Activated T-helper 1 cell treated with anti-CD3 and anti-CD28 coated beads, Interleukin-12 subunit alpha, Interleukin-12 subunit beta, Interleukin-2, Interleukin-4 antibody, amounts not matched to agents 30 ng/mL and 10 ng/mL and 1 ng/mL, durations not matched to agents 14 hours and 24 hours and 36 hours (primary cell): ENCODE measurements at regions of chr7 and their contacts with region 1.

Region 1: GRCh38 chr7:101165075-101165957 is at the start of gene VGF:
- DNase-seq: peak; percentile 92
- H3K4me3 Mint-ChIP-seq: peak within 1 kb of the TSS; percentile 85
- H3K27ac Mint-ChIP-seq: peak within 1 kb of the TSS; percentile 82
- H3K4me1 Mint-ChIP-seq: peaks cover 52% of the 10 kb centered on the region
- H3K27me3 Mint-ChIP-seq: peaks cover 61% of the 10 kb centered on the region
- total RNA-seq, gene VGF: 0.10 and 0.21 TPM in 2 replicates

Region 2: DNA sequence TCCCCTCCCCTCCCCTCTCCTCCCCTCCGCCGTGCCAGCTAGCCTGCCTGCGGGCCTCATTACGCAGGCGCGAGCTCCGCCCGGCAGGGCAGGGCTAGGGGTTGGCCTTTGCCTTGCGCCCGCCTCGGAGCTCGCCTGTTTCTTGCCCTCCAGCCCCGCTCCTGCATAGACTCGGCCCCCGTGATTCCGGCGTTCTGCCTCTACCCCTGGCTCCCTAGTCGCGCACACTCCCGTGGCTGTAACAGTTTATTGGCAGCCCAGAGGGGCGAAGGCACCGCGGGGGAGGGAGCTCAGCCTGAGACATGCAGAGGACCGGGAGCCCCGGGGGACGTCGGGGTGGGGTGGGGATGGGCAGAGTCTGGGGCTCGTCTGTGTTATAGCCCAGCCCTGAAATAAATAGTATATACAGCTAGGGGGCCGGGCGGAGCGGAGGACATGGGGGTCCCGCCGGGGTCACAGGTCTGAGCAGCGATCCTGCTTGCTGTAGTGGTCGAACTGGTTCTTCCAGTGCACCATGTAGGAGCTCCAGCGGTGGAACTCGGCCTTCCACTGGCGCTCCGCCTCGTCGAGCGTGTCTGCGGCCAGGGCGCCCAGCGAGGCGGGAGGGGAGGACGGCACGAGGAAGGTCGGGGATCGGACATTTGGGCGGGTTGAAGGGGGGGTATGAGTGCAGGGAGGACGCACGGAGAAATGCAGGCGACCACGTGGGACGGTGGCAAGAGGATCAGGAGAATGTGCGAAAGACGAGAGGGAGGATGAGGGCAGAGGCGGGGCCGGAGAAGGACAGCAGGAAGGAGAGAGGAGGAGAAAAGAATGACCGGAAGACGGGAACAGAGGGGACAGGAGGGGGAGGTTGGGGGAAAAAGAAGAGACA is 275.3 kb before region 1 on chr7:
- intact Hi-C with region 1: loop called (anchors 2 kb)
- DNase-seq: peak; percentile 91
- H3K4me3 Mint-ChIP-seq: peak overlapping the region; percentile 82
- H3K27ac Mint-ChIP-seq: peak overlapping the region; percentile 67
- H3K4me1 Mint-ChIP-seq: peaks cover 42% of the 10 kb centered on the region
- H3K27me3 Mint-ChIP-seq: peaks cover 23% of the 10 kb centered on the region

Region 3: DNA sequence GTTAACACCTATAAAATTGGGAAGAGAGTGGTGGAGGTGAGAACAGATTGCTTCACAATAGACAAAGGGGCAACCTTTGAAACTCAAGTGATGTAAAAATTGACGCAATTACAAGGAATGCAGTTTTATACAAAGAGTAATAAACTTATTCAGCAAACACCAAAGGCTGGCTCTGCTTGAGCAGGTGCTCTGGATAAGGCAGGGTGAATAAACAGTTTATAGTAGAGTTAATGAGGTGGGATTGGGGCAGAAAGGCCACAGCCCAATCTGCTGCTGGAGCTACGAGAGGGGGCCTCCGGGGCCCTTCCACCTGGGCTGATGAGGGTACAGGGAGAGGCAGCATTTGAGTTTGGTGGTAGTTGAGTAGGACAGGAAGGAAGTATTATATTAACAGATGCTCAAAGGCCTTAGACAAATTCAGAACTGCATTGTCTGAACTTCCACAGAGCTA is 189.9 kb before region 1 on chr7:
- intact Hi-C with region 1: no loop called
- DNase-seq: no peak
- H3K4me3 Mint-ChIP-seq: no peak overlapping the region
- H3K27ac Mint-ChIP-seq: no peak overlapping the region
- H3K4me1 Mint-ChIP-seq: no peaks in the 10 kb centered on the region
- H3K27me3 Mint-ChIP-seq: peaks cover 12% of the 10 kb centered on the region

Region 4: GRCh38 chr7:101308245-101309085 is 143.1 kb after region 1 on chr7:
- intact Hi-C with region 1: loop called (anchors 10 kb)
- DNase-seq: peak; percentile 1
- H3K4me3 Mint-ChIP-seq: peak overlapping the region; percentile 89
- H3K27ac Mint-ChIP-seq: peak overlapping the region; percentile 86
- H3K4me1 Mint-ChIP-seq: peaks cover 4% of the 10 kb centered on the region
- H3K27me3 Mint-ChIP-seq: peaks cover 24% of the 10 kb centered on the region